ENCODE measurements at regions of chr5 and their contacts with region 1.

Region 1: GRCh38 chr5:31442058-31442745 is 89.7 kb downstream of the DROSHA start:
- DNase-seq: no peak
- ATAC-seq: no peak
- H3K4me3 Mint-ChIP-seq: no peak overlapping the region
- H3K27ac Mint-ChIP-seq: no peak overlapping the region
- H3K4me1 Mint-ChIP-seq: no peaks in the 10 kb centered on the region
- H3K27me3 Mint-ChIP-seq: no peaks in the 10 kb centered on the region
- CTCF ChIP-seq: no peak

Region 2: DNA sequence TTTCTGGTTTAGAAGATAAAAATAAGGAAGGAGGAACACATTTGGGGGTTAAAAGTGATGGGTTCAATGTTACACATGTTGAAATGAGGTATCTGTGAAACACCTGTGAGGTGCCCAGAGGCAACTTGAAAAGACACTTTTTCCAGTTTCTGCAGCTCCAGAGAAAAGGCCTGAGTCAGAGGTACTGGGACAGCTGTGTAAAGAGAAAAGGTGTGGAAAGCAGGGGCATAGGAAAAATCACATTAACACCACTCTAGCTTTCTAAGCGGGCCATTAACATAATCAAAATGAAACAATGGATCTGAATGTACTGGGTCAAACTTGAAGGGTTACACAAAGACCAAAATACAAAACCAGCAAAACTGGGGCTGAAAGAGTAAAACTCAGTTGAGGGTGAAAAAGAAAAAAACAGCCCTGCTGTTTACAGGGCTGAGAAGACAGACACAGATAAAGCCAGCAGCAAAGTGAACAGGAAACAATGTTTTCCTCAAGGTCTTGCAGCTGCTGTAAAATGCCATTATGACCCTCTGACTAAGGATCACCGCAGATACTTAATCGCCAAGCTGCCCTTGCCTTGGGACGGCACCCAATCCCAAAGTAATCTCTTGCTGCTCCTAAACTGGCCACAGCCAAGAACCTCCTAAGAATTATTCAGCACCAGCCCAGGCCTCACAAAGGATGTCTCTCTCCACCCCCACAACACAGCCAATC is 15.0 kb before region 1 on chr5:
- CTCF ChIA-PET with region 1: no interaction called
- POLR2A ChIA-PET with region 1: no interaction called
- intact Hi-C with region 1: no loop called
- DNase-seq: no peak
- ATAC-seq: no peak
- H3K4me3 Mint-ChIP-seq: no peak overlapping the region
- H3K27ac Mint-ChIP-seq: no peak overlapping the region
- H3K4me1 Mint-ChIP-seq: no peaks in the 10 kb centered on the region
- H3K27me3 Mint-ChIP-seq: no peaks in the 10 kb centered on the region
- CTCF ChIP-seq: no peak

Region 3: DNA sequence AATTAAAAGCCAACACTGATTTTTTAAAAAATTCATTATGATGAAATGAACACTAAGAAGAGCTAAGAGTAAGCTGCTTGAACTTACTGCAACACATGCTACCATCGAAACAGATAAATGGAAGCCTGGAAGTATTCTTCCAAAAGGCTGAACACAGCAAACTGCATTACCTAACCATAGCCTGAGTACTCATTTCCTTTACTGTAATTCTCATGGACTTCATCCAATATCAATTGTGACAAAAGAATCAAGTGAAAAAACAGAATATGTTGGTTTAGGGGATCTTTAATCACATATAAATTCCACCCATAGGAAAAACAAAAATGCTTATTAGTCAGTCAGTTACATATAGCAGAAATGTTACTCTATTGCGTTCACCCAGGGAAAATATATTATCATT is 21.1 kb after region 1 on chr5:
- CTCF ChIA-PET with region 1: no interaction called
- POLR2A ChIA-PET with region 1: interaction called, 16 read pairs
- intact Hi-C with region 1: no loop called
- DNase-seq: no peak
- ATAC-seq: no peak
- H3K4me3 Mint-ChIP-seq: no peak overlapping the region
- H3K27ac Mint-ChIP-seq: no peak overlapping the region
- H3K4me1 Mint-ChIP-seq: no peaks in the 10 kb centered on the region
- H3K27me3 Mint-ChIP-seq: no peaks in the 10 kb centered on the region
- CTCF ChIP-seq: no peak

Region 4: GRCh38 chr5:31537856-31538255 is 95.7 kb after region 1 on chr5:
- CTCF ChIA-PET with region 1: no interaction called
- POLR2A ChIA-PET with region 1: no interaction called
- intact Hi-C with region 1: no loop called
- DNase-seq: no peak
- ATAC-seq: no peak
- H3K4me3 Mint-ChIP-seq: no peak overlapping the region
- H3K27ac Mint-ChIP-seq: no peak overlapping the region
- H3K4me1 Mint-ChIP-seq: peaks cover 15% of the 10 kb centered on the region
- H3K27me3 Mint-ChIP-seq: no peaks in the 10 kb centered on the region
- CTCF ChIP-seq: no peak

Measured in activated B cell treated with CpG ODN at 0.5 μM for 24 hours (primary cell).